ENCODE measurements at regions of chr1 and their contacts with region 1.

Region 1: GRCh38 chr1:159092036-159092760 is 15.6 kb upstream of the AIM2 start:
- DNase-seq: peak; percentile 66
- H3K4me3 ChIP-seq: no peak overlapping the region
- H3K27ac ChIP-seq: no peak overlapping the region
- H3K4me1 ChIP-seq: peaks cover 4% of the 10 kb centered on the region
- H3K27me3 ChIP-seq: peaks cover 15% of the 10 kb centered on the region
- CTCF ChIP-seq: no peak

Region 2: GRCh38 chr1:159077120-159077961 is 14.9 kb before region 1 on chr1:
- CTCF ChIA-PET with region 1: no interaction called
- POLR2A ChIA-PET with region 1: no interaction called
- intact Hi-C with region 1: loop called (anchors 2 kb)
- DNase-seq: peak; percentile 5
- H3K4me3 ChIP-seq: no peak overlapping the region
- H3K27ac ChIP-seq: no peak overlapping the region
- H3K4me1 ChIP-seq: no peaks in the 10 kb centered on the region
- H3K27me3 ChIP-seq: peaks cover 33% of the 10 kb centered on the region
- CTCF ChIP-seq: no peak

Region 3: GRCh38 chr1:159218649-159219636 is 126.7 kb after region 1 on chr1:
- CTCF ChIA-PET with region 1: no interaction called
- POLR2A ChIA-PET with region 1: no interaction called
- intact Hi-C with region 1: no loop called
- DNase-seq: no peak
- H3K4me3 ChIP-seq: no peak overlapping the region
- H3K27ac ChIP-seq: no peak overlapping the region
- H3K4me1 ChIP-seq: no peaks in the 10 kb centered on the region
- H3K27me3 ChIP-seq: peaks cover 60% of the 10 kb centered on the region
- CTCF ChIP-seq: no peak